Activated T-helper 1 cell treated with anti-CD3 and anti-CD28 coated beads, Interleukin-12 subunit alpha, Interleukin-12 subunit beta, Interleukin-2, Interleukin-4 antibody, amounts not matched to agents 30 ng/mL and 10 ng/mL and 1 ng/mL, durations not matched to agents 14 hours and 24 hours and 36 hours (primary cell): ENCODE measurements at regions of chr15 and their contacts with region 1.

Region 1: DNA sequence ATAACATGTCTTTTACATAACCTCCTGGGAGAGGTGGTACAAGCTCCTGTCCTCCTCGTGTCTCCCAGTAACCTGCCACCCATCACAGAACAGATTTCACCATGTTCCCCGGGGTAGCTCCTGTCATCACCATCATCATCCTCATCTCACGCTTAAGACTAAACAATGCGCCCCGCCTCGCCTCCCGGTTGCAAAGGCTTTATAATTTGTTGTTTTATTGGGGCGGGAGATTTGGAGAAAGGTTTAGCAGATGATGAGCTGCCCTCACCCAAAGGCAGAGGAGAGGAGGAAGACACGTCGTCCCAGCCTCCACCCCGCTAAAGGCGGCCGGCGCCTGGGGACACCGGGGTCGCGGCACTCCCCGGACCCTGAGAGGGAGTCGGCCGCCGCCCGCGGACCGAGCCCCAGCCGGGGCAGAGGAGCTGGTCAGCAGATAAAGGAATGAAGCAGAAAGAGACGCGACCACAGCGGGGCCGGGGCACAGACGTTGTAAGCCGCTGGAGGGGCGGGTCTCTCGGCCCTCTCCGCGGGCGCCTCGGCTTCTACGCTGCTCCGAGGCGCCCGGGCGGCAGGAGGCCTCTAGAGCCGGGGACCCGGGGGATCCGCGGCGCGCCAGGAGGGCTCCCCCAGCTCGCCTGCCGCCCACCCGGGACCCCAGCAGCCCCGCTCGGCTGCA is 589 bp downstream of the HERC1 start:
- DNase-seq: peak; percentile 25
- H3K4me3 Mint-ChIP-seq: peak overlapping the region; percentile 91
- H3K27ac Mint-ChIP-seq: peak overlapping the region; percentile 96
- H3K4me1 Mint-ChIP-seq: peaks cover 48% of the 10 kb centered on the region
- H3K27me3 Mint-ChIP-seq: peaks cover 5% of the 10 kb centered on the region

Region 2: DNA sequence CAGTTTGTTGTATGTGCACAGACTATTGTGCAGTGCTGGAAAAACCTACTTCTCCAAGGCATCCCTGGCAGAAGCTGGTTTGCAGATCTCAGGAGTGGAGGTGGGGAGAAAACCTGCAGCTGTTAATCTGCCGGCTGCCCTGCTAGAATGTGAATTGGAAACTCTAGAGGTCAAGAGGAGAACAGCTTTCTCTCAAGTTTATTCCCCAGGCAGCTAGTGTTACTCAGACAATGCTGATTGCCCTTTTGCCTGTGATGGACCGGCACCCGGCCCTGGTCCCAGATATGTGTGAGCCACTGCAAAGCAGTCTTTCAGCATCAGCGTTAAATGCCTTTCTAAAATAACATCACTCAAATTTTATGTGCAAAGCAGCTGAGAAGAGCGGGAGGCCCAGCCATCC is 920.4 kb before region 1 on chr15:
- intact Hi-C with region 1: no loop called
- DNase-seq: no peak
- H3K4me3 Mint-ChIP-seq: no peak overlapping the region
- H3K27ac Mint-ChIP-seq: no peak overlapping the region
- H3K4me1 Mint-ChIP-seq: no peaks in the 10 kb centered on the region
- H3K27me3 Mint-ChIP-seq: peaks cover 19% of the 10 kb centered on the region

Region 3: GRCh38 chr15:63504247-63504978 is 328.7 kb before region 1 on chr15 and contains the start of gene USP3:
- intact Hi-C with region 1: loop called (anchors 10 kb)
- DNase-seq: peak; percentile 91
- H3K4me3 Mint-ChIP-seq: peak within 1 kb of the TSS; percentile 93
- H3K27ac Mint-ChIP-seq: peak within 1 kb of the TSS; percentile 93
- H3K4me1 Mint-ChIP-seq: peaks cover 83% of the 10 kb centered on the region
- H3K27me3 Mint-ChIP-seq: no peaks in the 10 kb centered on the region
- total RNA-seq, gene USP3: 46.9 and 58.9 TPM in 2 replicates

Region 4: GRCh38 chr15:63752075-63752684 is 81.0 kb before region 1 on chr15:
- intact Hi-C with region 1: loop called (anchors 5 kb)
- DNase-seq: peak; percentile 21
- H3K4me3 Mint-ChIP-seq: no peak overlapping the region
- H3K27ac Mint-ChIP-seq: no peak overlapping the region
- H3K4me1 Mint-ChIP-seq: peaks cover 9% of the 10 kb centered on the region
- H3K27me3 Mint-ChIP-seq: no peaks in the 10 kb centered on the region

Region 5: DNA sequence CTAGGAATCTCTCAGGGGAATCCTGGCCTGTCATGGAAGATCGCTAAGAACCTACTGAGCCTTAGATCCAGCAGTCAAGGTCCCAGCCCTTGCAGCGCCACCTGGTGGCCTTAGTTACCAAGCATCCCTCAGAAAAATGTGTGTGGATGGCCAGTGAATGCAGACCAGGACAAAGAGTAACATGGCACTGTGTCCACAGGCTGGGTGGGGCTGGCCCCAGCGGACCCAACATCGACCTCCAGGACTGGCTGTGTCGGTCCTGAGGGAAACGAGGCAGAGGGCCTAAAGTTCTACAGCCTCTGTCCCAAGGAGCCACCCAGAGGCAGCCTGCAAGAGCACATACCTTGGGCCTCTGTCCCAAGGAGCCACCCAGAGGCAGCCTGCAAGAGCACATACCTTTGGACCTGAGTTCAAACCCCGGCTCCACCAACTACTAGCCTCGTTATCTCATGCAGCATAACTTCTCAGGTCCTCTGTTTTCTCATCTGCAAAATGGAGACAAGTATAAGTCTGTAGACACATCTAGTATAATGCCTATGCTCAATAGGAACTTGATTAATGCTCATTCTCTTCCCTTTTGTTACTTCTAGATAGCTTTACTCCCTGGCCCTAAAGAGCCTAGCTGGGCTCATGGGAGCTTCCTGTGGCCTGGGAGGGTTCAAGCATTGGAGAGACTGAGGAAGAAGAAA is 58.1 kb after region 1 on chr15:
- intact Hi-C with region 1: loop called (anchors 1 kb)
- DNase-seq: peak; percentile 59
- H3K4me3 Mint-ChIP-seq: no peak overlapping the region
- H3K27ac Mint-ChIP-seq: peak overlapping the region; percentile 76
- H3K4me1 Mint-ChIP-seq: peaks cover 62% of the 10 kb centered on the region
- H3K27me3 Mint-ChIP-seq: peaks cover 1% of the 10 kb centered on the region

Region 6: GRCh38 chr15:64010719-64011118 is 177.6 kb after region 1 on chr15:
- intact Hi-C with region 1: loop called (anchors 2 kb)
- DNase-seq: peak; percentile 79
- H3K4me3 Mint-ChIP-seq: peak overlapping the region; percentile 64
- H3K27ac Mint-ChIP-seq: peak overlapping the region; percentile 87
- H3K4me1 Mint-ChIP-seq: peaks cover 61% of the 10 kb centered on the region
- H3K27me3 Mint-ChIP-seq: no peaks in the 10 kb centered on the region

Region 7: DNA sequence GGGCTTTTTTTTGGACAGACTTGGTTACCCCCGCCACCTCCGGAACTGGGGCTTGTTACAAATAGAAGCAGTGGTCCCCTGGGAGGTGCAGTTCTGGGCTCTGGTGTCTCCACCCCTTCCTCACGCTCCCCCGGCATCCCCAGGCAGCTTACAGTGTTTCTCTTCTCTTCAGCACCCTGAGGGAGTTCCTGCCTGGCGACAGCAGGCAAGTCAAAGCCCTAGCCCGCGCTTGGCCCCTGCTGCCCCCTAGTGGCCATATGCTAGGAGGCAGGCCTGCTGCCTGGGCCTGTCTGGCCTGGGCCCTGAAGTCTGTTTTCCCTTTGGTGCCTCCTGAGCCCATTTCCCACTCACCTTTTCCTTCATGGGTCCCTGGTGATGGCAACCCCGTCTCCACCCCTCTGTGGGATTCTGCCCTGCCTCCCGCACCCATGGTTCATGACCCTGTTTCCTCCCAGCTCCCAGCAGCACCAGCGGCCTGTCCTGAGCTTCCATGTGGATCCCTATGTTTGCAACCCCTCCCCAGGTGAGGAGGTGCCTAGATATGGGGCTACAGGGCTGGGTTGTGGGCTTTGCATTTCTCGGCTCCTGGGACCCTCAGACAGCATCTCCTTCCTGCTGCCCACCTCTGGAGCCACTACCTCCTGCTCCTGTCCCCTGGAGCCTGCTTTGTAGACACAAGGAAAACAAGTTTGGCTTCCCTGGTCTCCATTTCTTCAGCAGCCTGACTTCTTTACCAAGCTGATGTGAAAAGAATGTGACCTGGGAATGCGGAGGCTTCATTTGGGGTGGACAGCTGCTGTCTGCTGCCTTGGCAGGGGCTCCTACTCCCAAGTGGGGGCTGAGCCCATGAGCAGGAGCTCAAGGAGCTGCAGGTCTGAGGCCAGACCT is 320.6 kb after region 1 on chr15:
- intact Hi-C with region 1: loop called (anchors 5 kb)
- DNase-seq: peak; percentile 87
- H3K4me3 Mint-ChIP-seq: peak overlapping the region; percentile 80
- H3K27ac Mint-ChIP-seq: peak overlapping the region; percentile 75
- H3K4me1 Mint-ChIP-seq: peaks cover 25% of the 10 kb centered on the region
- H3K27me3 Mint-ChIP-seq: peaks cover 5% of the 10 kb centered on the region